ENCODE measurements at regions of chr9 and their contacts with region 1.

Region 1: DNA sequence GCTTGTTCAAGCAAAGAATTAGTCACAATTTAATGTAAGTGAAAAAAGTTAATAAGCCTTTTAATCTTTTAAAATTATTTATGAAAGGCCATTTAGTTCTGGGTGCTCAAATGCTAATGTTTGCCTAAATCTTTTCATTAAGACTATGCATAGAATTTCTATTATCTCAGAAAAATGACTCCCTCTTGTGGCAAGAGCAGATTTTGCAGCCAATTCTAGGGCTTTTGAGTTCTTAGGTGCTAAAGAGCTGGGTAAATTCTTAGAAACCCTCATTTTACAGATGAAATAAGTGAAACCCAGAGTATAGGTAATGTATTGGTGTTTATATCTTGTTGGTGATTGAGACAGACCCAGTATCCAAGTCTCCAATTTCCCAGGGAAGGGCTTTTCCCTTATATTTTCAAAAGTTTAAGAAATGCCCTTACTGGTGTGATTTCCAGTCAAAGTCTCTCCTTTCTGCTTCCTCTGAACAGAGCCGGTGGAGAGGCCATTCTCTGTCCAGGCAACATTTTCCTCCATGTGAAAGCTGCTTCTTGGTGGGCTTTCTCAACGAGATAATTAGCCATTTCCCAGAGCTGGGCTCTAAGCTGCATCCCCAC is 24.1 kb upstream of the PCSK5 start:
- H3K4me3 ChIP-seq: no peak overlapping the region
- H3K27ac ChIP-seq: no peak overlapping the region
- H3K4me1 ChIP-seq: no peaks in the 10 kb centered on the region
- CTCF ChIP-seq: no peak

Region 2: DNA sequence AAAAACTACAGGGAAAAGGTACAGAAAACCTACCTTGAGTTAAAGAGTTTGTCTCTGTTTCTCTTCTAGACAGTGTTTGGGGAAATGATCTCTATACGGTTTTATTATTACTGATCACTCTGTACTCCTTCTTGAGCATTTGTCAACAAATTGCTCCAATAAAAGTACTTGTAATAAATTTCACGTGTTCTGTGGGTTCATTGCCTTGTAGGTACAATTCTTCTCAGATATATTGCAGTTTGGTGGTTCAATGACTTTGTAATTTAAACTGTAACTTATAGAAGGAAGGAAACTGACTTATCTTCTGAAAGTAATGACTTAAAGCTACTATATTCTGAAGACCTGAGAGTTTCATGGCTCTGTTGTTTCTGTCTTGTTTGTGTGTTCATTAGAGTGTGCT is 295.8 kb before region 1 on chr9:
- CTCF ChIA-PET with region 1: no interaction called
- POLR2A ChIA-PET with region 1: no interaction called
- H3K4me3 ChIP-seq: no peak overlapping the region
- H3K27ac ChIP-seq: no peak overlapping the region
- H3K4me1 ChIP-seq: no peaks in the 10 kb centered on the region
- CTCF ChIP-seq: no peak

Region 3: GRCh38 chr9:75601279-75601678 is 265.1 kb before region 1 on chr9:
- CTCF ChIA-PET with region 1: interaction called, 17 read pairs
- POLR2A ChIA-PET with region 1: no interaction called
- H3K4me3 ChIP-seq: no peak overlapping the region
- H3K27ac ChIP-seq: no peak overlapping the region
- H3K4me1 ChIP-seq: no peaks in the 10 kb centered on the region
- CTCF ChIP-seq: no peak

Region 4: GRCh38 chr9:75798505-75798904 is 67.9 kb before region 1 on chr9:
- CTCF ChIA-PET with region 1: no interaction called
- POLR2A ChIA-PET with region 1: no interaction called
- H3K4me3 ChIP-seq: no peak overlapping the region
- H3K27ac ChIP-seq: no peak overlapping the region
- H3K4me1 ChIP-seq: no peaks in the 10 kb centered on the region
- CTCF ChIP-seq: no peak

Region 5: GRCh38 chr9:75855509-75855908 is 10.9 kb before region 1 on chr9:
- CTCF ChIA-PET with region 1: interaction called, 12 read pairs
- POLR2A ChIA-PET with region 1: no interaction called
- H3K4me3 ChIP-seq: no peak overlapping the region
- H3K27ac ChIP-seq: no peak overlapping the region
- H3K4me1 ChIP-seq: no peaks in the 10 kb centered on the region
- CTCF ChIP-seq: 0 out of 2 replicates have a peak, but pooled peaks have one; percentile 8

Region 6: DNA sequence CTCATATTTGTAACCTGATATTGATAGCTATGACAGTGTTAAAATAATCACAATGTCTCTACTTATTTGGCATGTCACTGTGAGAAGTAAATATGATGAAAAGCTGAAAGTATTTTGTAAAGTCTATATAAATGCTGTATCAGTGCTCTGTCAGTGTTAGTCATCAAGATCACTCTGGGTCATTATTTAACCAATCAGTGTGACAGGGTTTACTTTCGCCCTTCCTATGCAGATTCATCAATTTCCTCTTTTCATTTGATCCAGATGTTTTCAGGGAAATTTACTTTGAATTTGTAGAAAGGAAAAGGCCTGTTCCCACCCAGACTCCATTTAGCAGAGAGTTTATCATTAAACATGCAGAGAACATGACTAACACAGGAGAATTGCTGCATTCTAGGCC is 14.2 kb after region 1 on chr9:
- CTCF ChIA-PET with region 1: interaction called, 15 read pairs
- POLR2A ChIA-PET with region 1: interaction called, 10 read pairs
- H3K4me3 ChIP-seq: no peak overlapping the region
- H3K27ac ChIP-seq: no peak overlapping the region
- H3K4me1 ChIP-seq: no peaks in the 10 kb centered on the region
- CTCF ChIP-seq: no peak

Region 7: DNA sequence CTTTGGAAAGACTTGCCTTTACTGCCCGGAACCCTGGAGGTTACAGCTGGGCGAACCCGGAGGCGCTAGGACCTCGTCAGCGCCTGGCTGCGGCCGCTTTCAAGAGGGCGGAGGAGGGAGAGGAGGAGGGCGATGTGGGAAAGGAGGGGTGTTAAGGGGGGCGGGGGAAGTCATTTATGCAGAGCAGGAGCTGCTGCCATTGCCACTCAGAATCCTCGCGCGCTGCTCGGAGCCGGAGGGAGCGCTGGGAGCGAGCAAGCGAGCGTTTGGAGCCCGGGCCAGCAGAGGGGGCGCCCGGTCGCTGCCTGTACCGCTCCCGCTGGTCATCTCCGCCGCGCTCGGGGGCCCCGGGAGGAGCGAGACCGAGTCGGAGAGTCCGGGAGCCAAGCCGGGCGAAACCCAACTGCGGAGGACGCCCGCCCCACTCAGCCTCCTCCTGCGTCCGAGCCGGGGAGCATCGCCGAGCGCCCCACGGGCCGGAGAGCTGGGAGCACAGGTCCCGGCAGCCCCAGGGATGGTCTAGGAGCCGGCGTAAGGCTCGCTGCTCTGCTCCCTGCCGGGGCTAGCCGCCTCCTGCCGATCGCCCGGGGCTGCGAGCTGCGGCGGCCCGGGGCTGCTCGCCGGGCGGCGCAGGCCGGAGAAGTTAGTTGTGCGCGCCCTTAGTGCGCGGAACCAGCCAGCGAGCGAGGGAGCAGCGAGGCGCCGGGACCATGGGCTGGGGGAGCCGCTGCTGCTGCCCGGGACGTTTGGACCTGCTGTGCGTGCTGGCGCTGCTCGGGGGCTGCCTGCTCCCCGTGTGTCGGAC is 24.3 kb after region 1 on chr9 and contains the start of gene PCSK5:
- CTCF ChIA-PET with region 1: interaction called, 12 read pairs
- POLR2A ChIA-PET with region 1: interaction called, 4 read pairs
- H3K4me3 ChIP-seq: peak within 1 kb of the TSS; percentile 81
- H3K27ac ChIP-seq: peak within 1 kb of the TSS; percentile 82
- H3K4me1 ChIP-seq: peaks cover 11% of the 10 kb centered on the region
- CTCF ChIP-seq: peak; percentile 79

Region 8: GRCh38 chr9:76198336-76198735 is 332.0 kb after region 1 on chr9:
- CTCF ChIA-PET with region 1: no interaction called
- POLR2A ChIA-PET with region 1: no interaction called
- H3K4me3 ChIP-seq: no peak overlapping the region
- H3K27ac ChIP-seq: no peak overlapping the region
- H3K4me1 ChIP-seq: no peaks in the 10 kb centered on the region
- CTCF ChIP-seq: no peak